MCF 10A (cell line): ENCODE measurements at regions of chr1 and their contacts with region 1.

Region 1: DNA sequence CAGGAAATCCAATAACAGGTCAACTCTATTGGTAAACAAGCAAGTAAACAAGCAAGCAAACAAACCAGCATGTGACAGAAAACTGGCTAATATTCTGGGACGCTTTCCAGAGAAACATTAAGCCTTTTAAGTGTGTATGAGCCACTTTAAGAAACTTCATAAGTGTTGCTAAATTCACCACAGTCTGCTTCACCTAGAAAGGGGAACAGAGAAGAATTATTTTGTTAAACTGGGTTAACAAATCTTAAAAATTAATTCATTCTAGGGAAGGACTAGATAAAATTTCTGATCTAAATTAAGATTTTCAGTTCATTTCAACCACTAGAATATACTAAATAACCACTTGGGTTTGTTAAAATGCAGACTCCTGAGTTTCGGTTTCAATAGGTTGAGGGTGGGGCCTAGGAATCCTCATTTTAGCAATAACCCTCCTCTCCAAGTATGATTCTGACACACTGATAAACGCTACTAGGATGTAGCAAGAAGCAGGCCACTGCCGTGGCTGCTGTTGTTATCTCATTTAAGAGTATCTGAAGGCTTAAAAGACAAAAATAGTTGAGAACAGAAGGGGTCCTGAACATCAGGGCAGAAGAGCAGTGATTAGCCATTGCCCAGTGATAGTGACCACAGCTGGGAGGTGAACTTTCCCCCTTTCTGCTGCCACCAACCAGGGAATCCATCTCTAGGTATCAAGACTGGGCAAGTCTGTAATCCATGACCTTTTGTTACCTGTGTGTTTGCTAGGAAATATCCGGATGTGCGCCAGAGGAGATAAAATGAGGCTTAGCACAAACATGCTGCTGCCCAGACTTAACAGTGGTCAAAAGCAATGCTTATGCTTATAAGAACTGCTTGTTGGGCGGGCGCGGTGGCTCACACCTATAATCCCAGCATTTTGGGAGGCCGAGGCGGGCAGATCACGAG is 11.2 kb downstream of the CREG1 start:
- DNase-seq: peak; percentile 77
- H3K4me3 Mint-ChIP-seq: no peak overlapping the region
- H3K27ac Mint-ChIP-seq: peak overlapping the region; percentile 29
- H3K4me1 Mint-ChIP-seq: peaks cover 42% of the 10 kb centered on the region
- H3K27me3 Mint-ChIP-seq: no peaks in the 10 kb centered on the region
- CTCF ChIP-seq: no peak

Region 2: DNA sequence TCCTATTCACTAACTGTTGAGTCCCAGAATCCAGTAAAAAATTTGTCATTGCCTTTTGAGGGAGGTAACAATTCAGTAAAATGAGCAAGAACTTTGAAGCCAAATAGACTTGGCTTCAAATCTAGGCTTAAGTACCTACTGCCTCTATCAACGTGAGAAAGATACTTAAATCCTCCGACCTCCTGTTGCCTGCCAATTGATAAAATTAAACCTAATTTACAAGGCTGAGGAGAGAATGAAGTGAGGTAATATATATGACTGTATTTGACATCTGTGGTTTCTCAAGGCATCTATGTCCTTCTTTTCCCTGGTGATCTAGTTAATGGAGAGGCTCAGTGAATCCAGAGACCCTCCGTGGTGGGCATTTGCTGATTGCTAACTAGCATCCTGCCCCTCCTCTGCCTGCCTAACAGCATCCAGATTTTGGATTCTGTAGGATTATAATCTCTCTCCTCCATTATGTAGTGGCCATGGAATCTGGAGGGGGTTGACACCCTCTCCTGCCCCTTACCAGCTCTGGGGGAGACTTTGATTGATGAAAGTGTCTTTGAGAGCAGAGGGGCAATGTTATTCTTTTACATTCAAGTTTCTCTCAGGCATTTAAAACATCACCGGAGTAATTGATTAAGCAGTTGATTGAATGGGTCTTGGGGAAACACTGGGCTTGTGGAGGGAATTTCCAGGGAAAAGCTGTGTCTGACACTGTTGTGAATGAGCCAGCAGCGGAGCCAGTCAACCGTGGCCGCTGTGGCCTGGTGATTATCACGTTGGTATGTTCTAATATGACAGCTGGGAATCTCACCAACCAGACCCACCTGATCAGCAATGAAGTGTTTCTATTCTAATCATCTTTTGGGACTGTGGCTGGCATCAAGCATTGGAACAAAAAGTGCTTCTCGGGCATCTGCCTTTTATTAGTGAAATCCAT is 1234.8 kb before region 1 on chr1:
- CTCF ChIA-PET with region 1: no interaction called
- POLR2A ChIA-PET with region 1: no interaction called
- intact Hi-C with region 1: no loop called
- DNase-seq: no peak
- H3K4me3 Mint-ChIP-seq: no peak overlapping the region
- H3K27ac Mint-ChIP-seq: no peak overlapping the region
- H3K4me1 Mint-ChIP-seq: no peaks in the 10 kb centered on the region
- H3K27me3 Mint-ChIP-seq: no peaks in the 10 kb centered on the region
- CTCF ChIP-seq: no peak

Region 3: DNA sequence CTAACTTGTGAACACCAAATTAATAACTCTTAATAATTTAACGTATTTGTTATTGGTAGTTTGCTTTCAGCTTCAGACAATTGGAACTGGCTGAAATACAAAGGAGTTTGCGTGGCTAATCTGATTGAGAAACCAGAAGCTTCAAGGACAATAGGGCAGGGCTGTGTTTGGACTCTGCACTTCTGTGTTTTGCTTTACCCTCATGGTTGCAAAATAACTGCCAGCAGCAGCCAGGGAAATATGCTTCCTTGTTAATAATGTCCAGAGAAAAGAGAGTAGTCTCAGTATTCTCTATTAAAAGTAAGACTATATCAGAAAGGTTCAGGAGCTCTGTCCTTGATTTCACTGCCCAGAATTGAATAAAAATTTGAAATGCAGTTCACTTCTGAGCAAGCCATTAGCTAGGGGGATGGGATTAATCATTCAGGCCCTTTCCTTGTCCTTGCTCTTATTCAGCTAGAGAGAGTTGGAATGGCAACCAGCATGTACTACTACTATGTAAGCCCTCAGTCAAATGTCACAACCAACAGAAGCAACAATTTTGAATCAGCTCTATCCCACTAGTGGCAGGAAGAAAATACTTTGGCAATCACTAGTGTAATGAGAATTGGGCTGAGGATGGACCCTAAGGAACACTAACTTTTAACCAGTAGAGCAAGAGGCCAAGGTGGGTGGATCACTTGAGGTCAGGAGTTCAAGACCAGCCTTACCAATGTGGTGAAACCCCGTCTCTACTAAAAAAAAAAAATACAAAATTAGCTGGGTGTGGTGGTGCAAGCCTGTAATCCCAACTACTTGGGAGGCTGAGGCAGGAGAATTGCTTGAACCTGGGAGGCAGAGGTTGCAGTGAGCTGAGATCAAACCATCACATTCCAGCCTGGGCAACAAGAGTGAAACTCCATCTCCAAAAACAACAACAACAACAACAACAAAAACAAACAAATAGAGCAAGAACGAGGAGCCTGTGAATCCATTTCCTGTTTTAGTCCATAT is 244.9 kb before region 1 on chr1:
- CTCF ChIA-PET with region 1: interaction called, 11 read pairs
- POLR2A ChIA-PET with region 1: no interaction called
- intact Hi-C with region 1: no loop called
- DNase-seq: peak; percentile 84
- H3K4me3 Mint-ChIP-seq: peak overlapping the region; percentile 25
- H3K27ac Mint-ChIP-seq: peak overlapping the region; percentile 86
- H3K4me1 Mint-ChIP-seq: peaks cover 22% of the 10 kb centered on the region
- H3K27me3 Mint-ChIP-seq: no peaks in the 10 kb centered on the region
- CTCF ChIP-seq: no peak

Region 4: GRCh38 chr1:167401260-167401873 is 141.0 kb before region 1 on chr1:
- CTCF ChIA-PET with region 1: interaction called, 20 read pairs
- POLR2A ChIA-PET with region 1: no interaction called
- intact Hi-C with region 1: no loop called
- DNase-seq: peak; percentile 76
- H3K4me3 Mint-ChIP-seq: no peak overlapping the region
- H3K27ac Mint-ChIP-seq: peak overlapping the region; percentile 23
- H3K4me1 Mint-ChIP-seq: peaks cover 6% of the 10 kb centered on the region
- H3K27me3 Mint-ChIP-seq: no peaks in the 10 kb centered on the region
- CTCF ChIP-seq: peak; percentile 72

Region 5: DNA sequence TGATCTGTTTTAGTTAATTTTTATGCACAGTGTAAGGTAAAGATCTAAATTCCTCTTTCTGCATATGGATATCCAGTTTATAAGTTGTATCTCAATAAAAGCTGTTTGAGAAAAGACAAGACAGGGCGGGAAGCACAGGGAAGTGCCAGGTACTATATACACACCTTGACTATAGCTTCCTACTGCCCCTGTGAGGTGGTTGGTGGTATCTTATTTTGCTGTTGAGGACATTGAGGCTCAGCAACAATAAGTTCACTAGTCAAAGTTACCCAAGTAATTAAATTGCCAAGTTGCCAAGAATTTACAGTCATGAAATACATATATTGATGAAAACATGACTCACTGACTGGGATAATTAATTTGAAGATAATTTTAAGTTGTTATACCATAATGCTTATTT is 133.2 kb before region 1 on chr1:
- CTCF ChIA-PET with region 1: interaction called, 12 read pairs
- POLR2A ChIA-PET with region 1: no interaction called
- intact Hi-C with region 1: no loop called
- DNase-seq: peak; percentile 48
- H3K4me3 Mint-ChIP-seq: no peak overlapping the region
- H3K27ac Mint-ChIP-seq: no peak overlapping the region
- H3K4me1 Mint-ChIP-seq: peaks cover 6% of the 10 kb centered on the region
- H3K27me3 Mint-ChIP-seq: no peaks in the 10 kb centered on the region
- CTCF ChIP-seq: peak; percentile 19

Region 6: DNA sequence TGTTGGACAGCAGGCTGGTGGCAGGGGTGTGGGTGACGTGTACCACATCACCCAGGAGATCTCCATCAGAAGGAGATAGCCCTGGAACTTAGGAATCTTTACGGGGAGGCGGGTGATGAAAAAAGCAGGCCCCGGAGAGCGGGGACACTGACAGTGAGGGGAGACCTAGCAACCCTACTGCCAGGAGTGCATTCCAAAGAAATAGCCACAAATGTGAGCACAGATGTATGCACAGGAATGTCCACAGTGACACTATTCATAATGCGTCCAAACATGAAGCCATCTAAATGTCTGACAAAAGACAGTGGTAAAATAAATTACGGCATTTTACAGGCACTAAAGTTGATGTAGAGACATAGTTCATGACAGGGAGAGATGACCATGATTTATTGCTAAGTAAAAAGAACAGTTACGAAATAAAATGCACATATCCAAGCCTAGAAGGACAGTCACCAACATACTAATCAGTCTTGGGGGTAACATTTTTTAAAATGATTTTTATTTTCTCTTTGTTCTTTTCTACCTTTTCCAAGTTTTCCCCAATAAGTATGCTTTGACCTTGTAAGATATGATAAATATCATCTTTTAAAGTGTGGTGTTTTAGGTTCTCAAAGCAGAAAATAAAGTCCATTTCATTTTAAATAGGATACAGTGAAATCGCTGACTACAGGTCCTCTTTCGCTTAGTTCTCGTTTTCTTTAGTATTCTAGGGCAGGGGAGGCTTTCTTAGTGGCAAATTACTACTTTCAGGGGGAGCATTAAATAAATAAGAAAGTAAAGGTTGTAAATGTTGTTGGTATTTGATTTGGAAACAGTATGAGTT is 45.4 kb before region 1 on chr1:
- CTCF ChIA-PET with region 1: no interaction called
- POLR2A ChIA-PET with region 1: no interaction called
- intact Hi-C with region 1: no loop called
- DNase-seq: no peak
- H3K4me3 Mint-ChIP-seq: no peak overlapping the region
- H3K27ac Mint-ChIP-seq: no peak overlapping the region
- H3K4me1 Mint-ChIP-seq: no peaks in the 10 kb centered on the region
- H3K27me3 Mint-ChIP-seq: peaks cover 62% of the 10 kb centered on the region
- CTCF ChIP-seq: no peak

Region 7: DNA sequence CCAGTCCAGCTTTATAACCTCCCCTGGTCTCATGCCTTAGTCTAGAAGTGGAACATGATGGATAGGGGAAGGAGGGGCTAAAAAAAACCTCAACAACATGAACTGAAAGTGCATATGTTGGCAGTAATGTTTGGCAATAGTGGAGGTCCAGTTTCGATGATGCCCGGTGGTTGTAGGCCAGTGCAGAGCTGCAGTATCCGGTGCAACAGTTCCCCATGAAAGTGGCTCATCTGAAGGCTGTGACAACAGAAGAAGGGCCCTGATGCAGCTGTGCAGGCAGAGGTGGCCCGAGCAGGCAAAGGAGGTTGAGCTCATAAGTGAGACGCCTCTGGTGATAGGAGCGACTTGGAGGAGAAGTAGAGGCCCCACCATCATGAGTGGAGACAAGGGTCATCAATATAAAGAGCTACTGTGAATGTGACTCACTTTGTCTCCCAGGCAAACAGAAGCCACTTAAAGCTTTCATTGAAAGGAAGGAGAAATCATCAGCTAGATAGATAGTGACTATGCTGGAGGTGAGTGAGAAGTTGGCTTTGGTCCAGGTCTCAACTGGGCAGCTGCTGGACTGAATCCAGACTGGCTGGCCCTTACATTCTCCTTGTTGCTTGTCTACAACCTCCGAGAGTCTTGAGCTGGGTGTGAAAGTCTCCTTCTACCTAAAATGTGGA is 21.3 kb after region 1 on chr1:
- CTCF ChIA-PET with region 1: interaction called, 139 read pairs
- POLR2A ChIA-PET with region 1: interaction called, 26 read pairs
- intact Hi-C with region 1: no loop called
- DNase-seq: peak; percentile 79
- H3K4me3 Mint-ChIP-seq: peak overlapping the region; percentile 64
- H3K27ac Mint-ChIP-seq: peak overlapping the region; percentile 85
- H3K4me1 Mint-ChIP-seq: peaks cover 46% of the 10 kb centered on the region
- H3K27me3 Mint-ChIP-seq: no peaks in the 10 kb centered on the region
- CTCF ChIP-seq: no peak

Region 8: DNA sequence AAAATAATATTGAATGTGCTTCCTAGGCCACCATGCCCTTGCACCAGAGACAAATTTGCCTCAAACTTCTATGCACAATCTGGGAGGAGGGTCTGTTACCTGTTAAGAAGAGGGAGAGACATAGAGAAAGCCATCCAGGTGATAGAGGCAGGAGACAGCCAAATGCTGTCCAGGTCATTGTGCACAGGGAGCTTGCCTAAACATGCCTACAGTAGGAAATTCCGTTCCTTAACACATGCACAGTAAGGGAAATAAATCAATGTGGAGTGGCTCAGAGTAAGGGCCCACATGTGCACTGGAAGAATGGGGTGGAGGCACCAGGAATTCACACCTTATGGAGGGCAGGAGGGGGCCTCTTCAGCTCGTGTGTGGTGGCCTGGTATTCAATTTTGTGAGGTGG is 30.7 kb after region 1 on chr1:
- CTCF ChIA-PET with region 1: interaction called, 15 read pairs
- POLR2A ChIA-PET with region 1: interaction called, 19 read pairs
- intact Hi-C with region 1: no loop called
- DNase-seq: peak; percentile 57
- H3K4me3 Mint-ChIP-seq: no peak overlapping the region
- H3K27ac Mint-ChIP-seq: peak overlapping the region; percentile 76
- H3K4me1 Mint-ChIP-seq: peaks cover 18% of the 10 kb centered on the region
- H3K27me3 Mint-ChIP-seq: no peaks in the 10 kb centered on the region
- CTCF ChIP-seq: no peak

Region 9: GRCh38 chr1:168321945-168322344 is 779.6 kb after region 1 on chr1:
- CTCF ChIA-PET with region 1: no interaction called
- POLR2A ChIA-PET with region 1: no interaction called
- intact Hi-C with region 1: no loop called
- DNase-seq: peak; percentile 76
- H3K4me3 Mint-ChIP-seq: no peak overlapping the region
- H3K27ac Mint-ChIP-seq: no peak overlapping the region
- H3K4me1 Mint-ChIP-seq: peaks cover 13% of the 10 kb centered on the region
- H3K27me3 Mint-ChIP-seq: no peaks in the 10 kb centered on the region
- CTCF ChIP-seq: peak; percentile 52